Posterior cingulate gyrus (tissue), 11 donors: ENCODE measurements at regions of chr7 and their contacts with region 1.

Region 1: DNA sequence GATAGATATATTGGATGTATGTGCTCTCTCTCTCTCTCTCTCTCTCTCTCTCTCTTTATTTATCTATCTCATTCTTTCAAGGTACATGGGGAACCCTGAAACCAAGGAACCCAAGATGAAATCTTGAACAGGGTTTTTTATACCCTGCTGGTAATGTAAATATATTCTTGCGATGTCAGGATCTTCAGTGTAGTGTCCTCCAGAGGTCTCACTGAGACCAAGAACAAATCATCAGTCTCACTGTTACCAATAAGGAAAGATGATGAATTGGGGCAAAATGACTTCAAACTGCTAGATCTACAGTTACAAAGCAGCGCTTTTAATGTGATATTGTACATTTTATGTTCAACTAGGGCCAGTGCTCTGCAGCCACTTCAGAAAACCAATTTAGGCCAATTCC is 423.5 kb downstream of the ANKRD7 start:
- DNase-seq: no peak

Region 2: GRCh38 chr7:118664498-118664897 is 16.5 kb after region 1 on chr7:
- intact Hi-C with region 1: loop called (anchors 1 kb)
- DNase-seq: no peak